Activated CD4-positive, alpha-beta T cell treated with anti-CD3 and anti-CD28 coated beads, Interleukin-2, amount 10 ng/mL, durations not matched to agents 24 days and 14 days (primary cell): ENCODE measurements at regions of chr16 and their contacts with region 1.

Region 1: DNA sequence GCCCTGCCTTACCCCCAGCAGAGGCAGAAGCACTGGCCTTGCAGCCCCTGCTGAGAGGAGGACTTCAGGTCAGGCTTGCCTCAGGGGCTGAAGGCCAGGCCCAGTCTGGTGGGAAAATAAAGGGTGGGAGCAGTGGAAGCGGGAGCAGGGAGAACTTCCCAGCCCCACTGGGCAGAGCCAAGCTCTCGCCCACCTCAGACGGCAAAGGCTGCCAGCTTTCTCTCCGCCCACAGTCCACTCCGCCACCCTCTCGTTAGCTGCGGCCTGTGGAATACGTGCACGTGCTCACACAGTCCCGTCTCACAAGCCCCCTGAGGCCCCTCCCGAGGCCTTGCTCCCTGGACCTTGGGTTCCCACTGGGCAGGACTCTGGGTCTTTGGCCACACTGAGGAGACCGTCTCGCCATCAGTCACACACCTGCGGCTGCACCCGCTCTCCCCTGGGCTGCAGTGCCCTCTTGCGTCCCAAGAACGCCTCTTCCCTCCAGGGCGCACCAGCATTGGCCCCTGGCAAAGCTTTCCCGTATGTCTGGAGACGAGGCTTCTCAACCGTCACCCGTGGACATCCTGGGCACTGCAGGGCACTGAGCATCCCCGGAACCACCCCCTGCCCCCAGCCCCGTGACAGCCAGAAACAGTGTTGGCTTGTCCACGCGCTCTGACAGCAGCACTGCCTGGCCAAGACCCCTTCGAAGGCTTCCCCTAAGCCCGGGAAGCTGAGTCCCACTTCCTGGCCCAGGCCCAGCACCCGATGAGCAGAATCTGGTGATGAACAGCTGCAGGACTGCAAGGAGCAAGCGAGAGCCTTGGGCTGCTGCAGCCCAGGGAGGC is 8.3 kb downstream of the MRPL28 start:
- DNase-seq: peak; percentile 92
- H3K4me3 Mint-ChIP-seq: peak overlapping the region; percentile 51
- H3K27ac Mint-ChIP-seq: no peak overlapping the region
- H3K4me1 Mint-ChIP-seq: peaks cover 4% of the 10 kb centered on the region
- H3K27me3 Mint-ChIP-seq: no peaks in the 10 kb centered on the region

Region 2: GRCh38 chr16:65671-66137 is 296.4 kb before region 1 on chr16:
- intact Hi-C with region 1: loop called (anchors 1 kb)
- DNase-seq: peak; percentile 96
- H3K4me3 Mint-ChIP-seq: no peak overlapping the region
- H3K27ac Mint-ChIP-seq: no peak overlapping the region
- H3K4me1 Mint-ChIP-seq: peaks cover 5% of the 10 kb centered on the region
- H3K27me3 Mint-ChIP-seq: peaks cover 12% of the 10 kb centered on the region

Region 3: GRCh38 chr16:106623-107324 is 255.3 kb before region 1 on chr16:
- intact Hi-C with region 1: loop called (anchors 1 kb)
- DNase-seq: peak; percentile 88
- H3K4me3 Mint-ChIP-seq: no peak overlapping the region
- H3K27ac Mint-ChIP-seq: no peak overlapping the region
- H3K4me1 Mint-ChIP-seq: no peaks in the 10 kb centered on the region
- H3K27me3 Mint-ChIP-seq: no peaks in the 10 kb centered on the region

Region 4: GRCh38 chr16:180938-181667 is 181.0 kb before region 1 on chr16:
- intact Hi-C with region 1: loop called (anchors 5 kb)
- DNase-seq: peak; percentile 96
- H3K4me3 Mint-ChIP-seq: peak overlapping the region; percentile 40
- H3K27ac Mint-ChIP-seq: no peak overlapping the region
- H3K4me1 Mint-ChIP-seq: no peaks in the 10 kb centered on the region
- H3K27me3 Mint-ChIP-seq: peaks cover 25% of the 10 kb centered on the region

Region 5: DNA sequence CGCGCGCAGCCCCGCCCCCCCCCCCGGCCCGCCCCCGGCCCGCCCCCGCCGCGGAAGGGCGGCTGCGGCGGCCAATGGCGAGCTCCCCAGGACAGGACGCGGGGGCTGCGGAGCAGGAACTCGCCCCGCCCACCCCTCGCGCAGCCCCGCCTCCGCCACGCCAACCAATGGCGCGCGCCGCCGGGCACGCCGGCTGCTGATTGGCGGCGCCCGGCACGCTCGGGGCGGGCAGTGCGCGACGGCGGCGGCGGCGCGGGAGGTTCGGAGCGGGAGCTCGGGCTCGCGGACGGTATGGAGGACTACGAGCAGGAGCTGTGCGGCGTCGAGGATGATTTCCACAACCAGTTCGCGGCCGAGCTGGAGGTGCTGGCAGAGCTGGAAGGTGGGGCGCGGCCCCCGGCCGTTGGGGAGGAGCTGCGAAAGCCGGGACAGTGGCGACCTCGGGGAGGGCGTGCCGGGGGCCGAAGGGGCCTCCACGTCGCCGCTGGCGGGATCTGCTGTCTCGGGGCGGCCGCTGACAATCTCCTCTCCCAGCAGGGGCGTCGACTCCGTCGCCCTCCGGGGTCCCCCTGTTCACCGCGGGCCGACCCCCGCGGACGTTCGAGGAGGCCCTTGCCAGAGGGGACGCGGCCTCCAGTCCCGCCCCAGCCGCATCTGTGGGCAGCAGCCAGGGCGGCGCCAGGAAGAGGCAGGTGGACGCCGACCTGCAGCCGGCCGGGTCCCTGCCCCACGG is 426.5 kb after region 1 on chr16 and contains the start of gene CHTF18:
- intact Hi-C with region 1: no loop called
- DNase-seq: peak; percentile 98
- H3K4me3 Mint-ChIP-seq: peak within 1 kb of the TSS; percentile 89
- H3K27ac Mint-ChIP-seq: peak within 1 kb of the TSS; percentile 81
- H3K4me1 Mint-ChIP-seq: peaks cover 5% of the 10 kb centered on the region
- H3K27me3 Mint-ChIP-seq: no peaks in the 10 kb centered on the region
- total RNA-seq, gene CHTF18: 141 and 147 TPM in 2 replicates